ENCODE measurements at regions of chr9 and their contacts with region 1.

Region 1: DNA sequence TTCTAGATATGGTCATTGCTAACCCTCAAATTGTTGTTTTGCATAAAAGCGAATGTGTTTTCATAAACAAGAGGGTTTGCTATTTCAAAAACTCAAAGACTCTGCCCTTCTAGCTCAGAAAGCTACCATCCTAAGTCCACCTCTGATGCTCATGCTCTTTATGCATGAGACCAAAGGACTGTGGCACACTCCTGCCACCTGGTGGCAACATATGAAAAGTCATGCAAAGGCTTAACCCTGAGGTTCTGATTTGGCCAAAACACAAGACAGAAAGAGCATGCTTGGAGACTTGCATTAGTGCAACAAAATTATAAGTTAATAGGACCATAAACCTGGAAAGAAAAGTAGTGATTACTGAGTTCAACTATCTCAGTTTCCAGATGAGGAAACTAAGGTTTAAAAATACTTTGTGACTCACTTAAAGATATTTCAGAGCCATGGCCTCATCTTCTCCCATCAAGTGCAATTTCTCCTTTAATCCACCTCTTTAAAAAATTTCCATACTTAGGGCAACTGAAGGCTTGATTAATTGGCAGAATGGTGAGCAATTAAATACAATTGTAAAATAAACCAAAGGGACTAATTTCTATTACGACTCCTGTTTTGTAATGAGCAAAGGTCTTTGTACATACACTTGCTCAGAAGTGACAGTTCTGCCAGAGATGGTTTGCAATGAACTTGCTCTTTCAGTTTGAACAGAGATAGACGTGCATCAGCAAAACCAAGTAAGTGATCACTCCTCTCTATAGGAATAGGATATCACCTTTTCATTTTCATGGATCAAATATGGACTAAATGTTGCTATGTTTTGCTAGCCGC is 110.7 kb upstream of the RAD23B start:
- DNase-seq: peak; percentile 80
- H3K4me3 ChIP-seq: no peak overlapping the region
- H3K27ac ChIP-seq: no peak overlapping the region
- H3K4me1 ChIP-seq: peaks cover 0 to 14% (median 7%) of the 10 kb centered on the region in 4 donors
- H3K27me3 ChIP-seq: no peaks in the 10 kb centered on the region
- CTCF ChIP-seq: peak; percentile 82 to 93 (median 86)
- EP300 ChIP-seq: no peak
- POLR2A ChIP-seq: no peak

Region 2: DNA sequence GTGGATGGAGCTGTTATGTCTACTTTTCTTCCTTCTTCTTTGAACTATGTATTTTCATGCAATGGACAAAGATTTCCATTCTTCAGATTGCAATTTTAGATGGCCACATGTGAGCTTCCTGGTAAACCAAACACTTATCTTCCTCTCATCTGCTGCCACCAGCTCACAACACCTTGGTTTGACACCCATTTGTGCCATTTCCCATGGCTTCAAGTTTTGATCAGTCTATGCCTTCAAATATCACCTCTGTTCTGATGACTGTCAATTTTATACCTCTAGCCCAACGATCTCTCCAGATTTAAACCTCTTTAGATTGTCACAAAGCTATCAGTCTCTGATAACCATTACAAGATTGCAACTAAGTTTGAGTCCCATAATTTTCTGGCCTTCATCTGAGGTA is 1330.8 kb before region 1 on chr9:
- in situ Hi-C with region 1: no loop called
- intact Hi-C with region 1: loop called (anchors 2 kb)
- DNase-seq: no peak
- H3K4me3 ChIP-seq: no peak overlapping the region
- H3K27ac ChIP-seq: no peak overlapping the region
- H3K4me1 ChIP-seq: no peaks in the 10 kb centered on the region
- H3K27me3 ChIP-seq: no peaks in the 10 kb centered on the region
- CTCF ChIP-seq: no peak
- EP300 ChIP-seq: no peak
- POLR2A ChIP-seq: no peak

Region 3: GRCh38 chr9:106648799-106649198 is 523.6 kb before region 1 on chr9:
- in situ Hi-C with region 1: loop called in 1 of 4 experiments (anchors 25 kb)
- intact Hi-C with region 1: no loop called
- DNase-seq: no peak
- H3K4me3 ChIP-seq: no peak overlapping the region
- H3K27ac ChIP-seq: no peak overlapping the region
- H3K4me1 ChIP-seq: no peaks in the 10 kb centered on the region
- H3K27me3 ChIP-seq: no peaks in the 10 kb centered on the region
- CTCF ChIP-seq: peak in 4 of 5 experiments; percentile 8 to 22 (median 18)
- EP300 ChIP-seq: no peak
- POLR2A ChIP-seq: no peak

Region 4: DNA sequence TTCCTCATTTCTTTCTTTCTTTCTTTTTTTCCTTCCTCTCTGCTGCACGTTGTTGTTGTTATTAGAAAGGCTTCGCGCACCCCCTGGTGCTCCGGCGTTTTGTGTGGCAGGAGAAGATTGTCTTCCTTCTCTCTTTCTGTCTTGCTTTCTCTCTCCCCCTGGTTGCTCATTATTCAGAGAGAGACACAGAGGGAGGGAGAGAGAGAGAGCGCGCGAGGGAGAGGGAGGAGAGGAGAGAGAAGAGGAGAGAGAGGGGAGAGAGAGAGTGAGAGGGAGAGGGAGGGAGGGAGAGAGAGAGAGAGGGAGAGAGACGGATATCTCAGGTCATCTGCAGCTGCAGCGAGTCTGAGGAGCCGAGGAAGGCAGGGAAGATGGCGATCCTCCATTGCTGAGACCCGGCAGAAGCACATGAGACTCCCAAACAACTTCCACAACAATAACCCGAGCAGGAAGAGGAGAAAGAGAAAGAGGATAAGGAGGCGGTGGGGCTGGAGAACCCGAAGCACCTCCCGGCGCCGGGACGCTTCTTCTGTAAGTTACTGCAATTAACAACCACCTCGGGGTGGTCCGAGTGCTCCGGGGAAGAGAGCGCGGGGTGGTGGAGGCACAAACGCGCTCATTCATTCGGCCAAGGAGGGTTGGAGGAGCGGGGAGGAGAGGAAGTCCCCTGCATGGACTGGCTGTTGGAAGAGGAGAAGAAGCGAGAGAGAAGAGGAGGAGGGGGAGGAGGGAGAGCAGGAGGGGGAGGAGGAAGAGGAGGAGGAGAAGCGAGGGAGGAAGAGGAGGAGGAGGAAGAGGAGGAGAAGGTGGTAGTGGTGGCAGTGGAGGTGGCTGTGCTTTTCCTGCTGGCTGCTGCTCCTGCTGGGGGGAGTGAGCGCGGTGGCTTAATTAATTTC is 309.3 kb before region 1 on chr9 and contains the start of gene ZNF462:
- in situ Hi-C with region 1: loop called in 1 of 4 experiments (anchors 25 kb)
- intact Hi-C with region 1: no loop called
- DNase-seq: peak; percentile 47
- H3K4me3 ChIP-seq: peak within 1 kb of the TSS; percentile 65 to 90 (median 80)
- H3K27ac ChIP-seq: peak within 1 kb of the TSS; percentile 83 to 91 (median 87)
- H3K4me1 ChIP-seq: peaks cover 0 to 48% (median 8%) of the 10 kb centered on the region in 4 donors
- H3K27me3 ChIP-seq: peaks cover 12% of the 10 kb centered on the region
- CTCF ChIP-seq: peak in 4 of 5 experiments; percentile 14 to 92 (median 44)
- EP300 ChIP-seq: no peak
- POLR2A ChIP-seq: peak; percentile 40
- total RNA-seq, gene ZNF462: 17.5 to 28.7 (median 22.9) TPM

Region 5: GRCh38 chr9:107809871-107810460 is 637.6 kb after region 1 on chr9:
- in situ Hi-C with region 1: no loop called
- intact Hi-C with region 1: no loop called
- DNase-seq: peak; percentile 18
- H3K4me3 ChIP-seq: no peak overlapping the region
- H3K27ac ChIP-seq: no peak overlapping the region
- H3K4me1 ChIP-seq: peaks cover 0 to 4% (median 0%) of the 10 kb centered on the region in 4 donors
- H3K27me3 ChIP-seq: no peaks in the 10 kb centered on the region
- CTCF ChIP-seq: no peak
- EP300 ChIP-seq: no peak
- POLR2A ChIP-seq: no peak